MCF 10A (cell line): ENCODE measurements at regions of chr12 and their contacts with region 1.

Region 1: GRCh38 chr12:38906482-38907170 is 1.2 kb upstream of the CPNE8 start:
- DNase-seq: peak; percentile 88
- H3K4me3 Mint-ChIP-seq: peak overlapping the region; percentile 98
- H3K27ac Mint-ChIP-seq: peak overlapping the region; percentile 89
- H3K4me1 Mint-ChIP-seq: peaks cover 22% of the 10 kb centered on the region
- H3K27me3 Mint-ChIP-seq: no peaks in the 10 kb centered on the region
- CTCF ChIP-seq: peak; percentile 81

Region 2: DNA sequence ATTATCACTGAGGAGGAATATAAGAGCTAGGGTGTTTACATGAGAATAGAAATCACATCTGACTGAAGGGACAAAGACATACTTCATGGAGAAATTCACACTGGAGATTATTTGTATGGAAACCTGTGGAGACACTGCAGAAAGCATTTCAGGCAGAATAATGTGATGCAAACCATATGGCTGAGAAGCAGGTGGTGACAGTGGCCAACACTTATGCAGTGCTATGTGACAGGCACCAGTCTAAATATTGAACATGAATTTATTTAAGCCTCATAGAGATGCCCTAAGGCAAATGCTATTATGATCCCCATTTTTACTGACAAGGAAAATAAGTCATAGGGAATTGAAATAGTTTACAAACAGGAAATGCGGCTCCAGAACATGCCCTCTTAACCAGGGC is 573.8 kb before region 1 on chr12:
- CTCF ChIA-PET with region 1: interaction called, 12 read pairs
- POLR2A ChIA-PET with region 1: interaction called, 10 read pairs
- intact Hi-C with region 1: loop called (anchors 2 kb)
- DNase-seq: no peak
- H3K4me3 Mint-ChIP-seq: no peak overlapping the region
- H3K27ac Mint-ChIP-seq: no peak overlapping the region
- H3K4me1 Mint-ChIP-seq: no peaks in the 10 kb centered on the region
- H3K27me3 Mint-ChIP-seq: no peaks in the 10 kb centered on the region
- CTCF ChIP-seq: no peak

Region 3: DNA sequence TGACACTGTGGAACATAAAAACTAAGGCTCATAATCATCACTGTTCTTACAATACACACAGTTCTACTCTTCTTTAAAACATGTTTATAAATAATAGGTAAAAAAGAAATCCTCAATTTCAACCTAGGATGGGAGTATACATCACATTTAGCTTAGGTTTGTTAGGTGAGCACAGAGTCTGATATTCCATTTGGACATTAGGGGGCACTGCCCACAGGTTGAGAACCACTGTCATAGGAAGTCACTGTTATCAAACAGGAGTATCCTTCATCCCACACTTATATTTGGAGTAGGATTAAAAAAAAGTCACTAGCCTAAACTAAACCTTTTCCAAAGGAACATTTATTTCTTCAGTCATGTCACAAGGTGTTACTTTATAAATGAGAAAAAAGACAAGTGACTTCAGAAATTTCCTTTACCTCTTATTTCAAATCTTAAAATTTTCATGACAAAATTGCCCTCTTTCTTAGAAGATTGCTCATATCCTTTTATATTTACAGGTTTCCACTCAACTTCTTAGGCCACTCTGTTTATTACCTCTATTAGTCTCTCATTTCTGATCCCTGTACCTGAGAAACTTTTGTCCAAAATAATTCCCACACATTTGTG is 241.9 kb before region 1 on chr12:
- CTCF ChIA-PET with region 1: interaction called, 12 read pairs
- POLR2A ChIA-PET with region 1: interaction called, 6 read pairs
- intact Hi-C with region 1: loop called (anchors 2 kb)
- DNase-seq: peak; percentile 58
- H3K4me3 Mint-ChIP-seq: no peak overlapping the region
- H3K27ac Mint-ChIP-seq: no peak overlapping the region
- H3K4me1 Mint-ChIP-seq: no peaks in the 10 kb centered on the region
- H3K27me3 Mint-ChIP-seq: no peaks in the 10 kb centered on the region
- CTCF ChIP-seq: peak; percentile 38

Region 4: DNA sequence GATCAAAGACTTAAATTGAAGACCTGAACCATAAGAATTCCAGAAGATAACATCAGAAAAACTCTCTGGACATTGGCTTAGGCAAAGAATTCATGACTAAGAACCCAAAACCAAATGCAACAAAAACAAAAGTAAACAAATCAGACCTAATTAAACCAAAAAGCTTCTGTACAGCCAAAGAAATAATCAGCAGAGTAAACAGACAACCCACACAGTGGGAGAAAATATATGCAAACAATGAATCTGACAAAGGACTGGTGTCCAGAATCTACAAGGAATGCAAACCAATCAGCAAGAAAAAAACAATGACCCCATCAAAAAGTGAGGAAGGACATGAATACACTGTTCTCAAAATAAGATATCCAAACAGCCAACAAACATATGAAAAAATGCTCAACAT is 190.0 kb before region 1 on chr12:
- CTCF ChIA-PET with region 1: no interaction called
- POLR2A ChIA-PET with region 1: no interaction called
- intact Hi-C with region 1: no loop called
- DNase-seq: no peak
- H3K4me3 Mint-ChIP-seq: no peak overlapping the region
- H3K27ac Mint-ChIP-seq: no peak overlapping the region
- H3K4me1 Mint-ChIP-seq: no peaks in the 10 kb centered on the region
- H3K27me3 Mint-ChIP-seq: no peaks in the 10 kb centered on the region
- CTCF ChIP-seq: no peak

Region 5: GRCh38 chr12:38872156-38872555 is 34.5 kb before region 1 on chr12:
- CTCF ChIA-PET with region 1: no interaction called
- POLR2A ChIA-PET with region 1: no interaction called
- intact Hi-C with region 1: no loop called
- DNase-seq: no peak
- H3K4me3 Mint-ChIP-seq: no peak overlapping the region
- H3K27ac Mint-ChIP-seq: peak overlapping the region; percentile 42
- H3K4me1 Mint-ChIP-seq: peaks cover 4% of the 10 kb centered on the region
- H3K27me3 Mint-ChIP-seq: no peaks in the 10 kb centered on the region
- CTCF ChIP-seq: no peak

Region 6: DNA sequence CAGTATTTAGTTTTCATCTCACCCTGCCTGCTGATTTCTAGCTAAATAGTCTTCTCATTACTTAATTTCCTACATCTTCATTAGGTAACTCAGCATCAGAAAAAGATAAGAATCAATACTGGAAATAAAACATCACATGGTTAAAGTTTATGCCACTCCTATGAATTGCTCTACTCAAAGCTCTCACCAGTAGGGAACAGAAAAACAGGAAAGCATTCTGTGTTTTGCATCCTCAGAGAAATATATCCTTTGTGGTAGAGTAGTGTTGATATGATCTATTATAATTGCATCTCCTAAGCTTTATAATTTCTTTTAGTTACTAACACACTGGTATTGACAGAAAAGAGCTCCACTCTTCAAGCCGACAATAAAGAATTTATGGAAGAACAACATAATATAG is 11.2 kb before region 1 on chr12:
- CTCF ChIA-PET with region 1: interaction called, 13 read pairs
- POLR2A ChIA-PET with region 1: interaction called, 24 read pairs
- intact Hi-C with region 1: no loop called
- DNase-seq: no peak
- H3K4me3 Mint-ChIP-seq: no peak overlapping the region
- H3K27ac Mint-ChIP-seq: no peak overlapping the region
- H3K4me1 Mint-ChIP-seq: peaks cover 14% of the 10 kb centered on the region
- H3K27me3 Mint-ChIP-seq: no peaks in the 10 kb centered on the region
- CTCF ChIP-seq: no peak

Region 7: GRCh38 chr12:39074063-39074462 is 167.4 kb after region 1 on chr12:
- CTCF ChIA-PET with region 1: interaction called, 11 read pairs
- POLR2A ChIA-PET with region 1: interaction called, 4 read pairs
- intact Hi-C with region 1: no loop called
- DNase-seq: no peak
- H3K4me3 Mint-ChIP-seq: no peak overlapping the region
- H3K27ac Mint-ChIP-seq: no peak overlapping the region
- H3K4me1 Mint-ChIP-seq: peaks cover 12% of the 10 kb centered on the region
- H3K27me3 Mint-ChIP-seq: no peaks in the 10 kb centered on the region
- CTCF ChIP-seq: no peak